Right ventricle myocardium inferior (tissue), 1 donor: ENCODE measurements at regions of chr10 and their contacts with region 1.

Region 1: DNA sequence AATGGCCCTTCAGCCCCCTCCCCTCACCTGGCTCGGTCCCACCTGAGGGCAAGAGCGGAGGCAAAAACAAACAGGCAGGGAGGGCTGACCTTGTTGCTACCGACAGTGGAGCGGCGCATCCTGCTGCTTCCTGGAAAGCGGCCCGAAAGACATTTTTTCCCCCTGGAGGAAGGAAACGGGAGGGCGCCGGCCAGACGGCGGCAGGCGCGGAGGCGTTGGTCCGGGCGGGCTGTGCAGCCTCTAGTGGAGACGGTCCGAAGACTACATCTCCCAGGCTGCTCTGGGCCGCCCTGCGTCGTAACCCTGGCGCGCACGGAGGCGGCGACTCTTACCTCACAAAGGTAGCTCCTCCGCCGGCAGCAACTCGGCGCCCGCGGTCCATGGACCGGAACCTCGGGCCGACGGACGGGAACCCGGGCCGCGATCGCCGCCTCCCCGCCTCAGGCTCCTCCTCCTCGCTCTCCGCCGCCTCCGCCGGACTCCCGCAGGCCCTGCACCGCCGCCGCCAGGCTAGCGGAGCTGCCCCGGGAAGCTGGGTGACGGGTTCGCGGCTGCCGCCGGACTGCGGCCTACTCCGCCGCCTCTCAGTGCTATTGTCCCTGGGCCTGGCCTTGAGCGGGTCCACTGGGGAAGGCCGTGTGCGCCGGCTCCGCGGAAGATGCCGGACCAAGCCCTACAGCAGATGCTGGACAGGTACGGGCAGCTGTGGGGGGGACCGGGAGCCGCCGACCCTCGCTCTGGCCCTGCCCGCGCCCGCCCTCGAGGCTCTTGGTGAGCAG is at the starts of genes CPEB3 and MARCHF5:
- DNase-seq: peak; percentile 99
- ATAC-seq: peak; percentile 100
- total RNA-seq, gene CPEB3: 14.1 TPM
- total RNA-seq, gene MARCHF5: 36.5 TPM

Region 2: DNA sequence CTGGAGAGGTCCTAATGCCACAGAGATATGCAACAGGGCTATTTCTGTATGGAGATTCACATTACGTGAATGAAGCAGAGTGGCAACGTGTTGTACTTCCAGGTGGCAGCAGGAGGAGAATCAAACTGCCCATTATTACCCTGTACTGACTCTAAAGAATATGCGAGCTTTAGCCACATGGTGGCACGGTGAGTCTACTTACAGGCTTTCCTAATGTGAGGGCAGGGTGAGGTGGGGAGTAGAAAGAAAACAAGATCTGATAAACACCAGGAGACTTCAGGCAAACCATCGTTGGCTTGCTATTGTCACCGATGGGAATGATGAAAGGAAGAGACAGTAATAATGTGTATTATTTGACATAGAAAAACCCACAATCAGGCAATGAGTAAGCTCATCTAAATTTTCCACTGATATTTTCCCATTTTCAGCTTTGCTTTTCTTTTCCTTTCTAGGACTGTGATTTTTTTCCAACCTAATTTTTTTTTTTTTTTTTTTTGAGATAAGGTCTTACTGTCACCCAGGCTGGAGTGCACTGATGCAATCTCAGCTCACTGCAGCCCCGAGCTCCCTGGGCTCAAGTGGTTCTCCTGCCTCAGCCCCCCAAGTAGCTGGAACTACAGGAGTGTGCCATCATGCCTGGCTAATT is 203.2 kb before region 1 on chr10:
- intact Hi-C with region 1: loop called (anchors 1 kb)
- DNase-seq: no peak
- ATAC-seq: peak; percentile 93

Region 3: GRCh38 chr10:92240289-92241157 is 50.5 kb before region 1 on chr10:
- intact Hi-C with region 1: loop called (anchors 1 kb)
- DNase-seq: no peak
- ATAC-seq: peak; percentile 76

Region 4: GRCh38 chr10:92419740-92420545 is 128.9 kb after region 1 on chr10:
- intact Hi-C with region 1: loop called (anchors 1 kb)
- DNase-seq: peak; percentile 75
- ATAC-seq: peak; percentile 71